ENCODE measurements at regions of chr1 and their contacts with region 1.

Region 1: GRCh38 chr1:91165033-91165654 is 143.3 kb upstream of the ZNF644 start:
- DNase-seq: peak; percentile 11
- ATAC-seq: peak; percentile 99
- H3K4me3 ChIP-seq: no peak overlapping the region
- H3K27ac ChIP-seq: no peak overlapping the region
- H3K4me1 ChIP-seq: no peaks in the 10 kb centered on the region
- H3K27me3 ChIP-seq: no peaks in the 10 kb centered on the region; a peak in 1 of 4 replicates
- CTCF ChIP-seq: peak; percentile 92 to 99 (median 95)
- EP300 ChIP-seq: no peak
- POLR2A ChIP-seq: no peak
- RAD21 ChIP-seq: peak; percentile 88

Region 2: GRCh38 chr1:90045853-90046563 is 1119.1 kb before region 1 on chr1:
- CTCF ChIA-PET with region 1: interaction called, 19 read pairs
- POLR2A ChIA-PET with region 1: no interaction called
- RAD21 ChIA-PET with region 1: no interaction called
- SMC1A ChIA-PET with region 1: interaction called, 3 read pairs
- in situ Hi-C with region 1: no loop called
- intact Hi-C with region 1: loop called (anchors 2 kb)
- DNase-seq: no peak
- ATAC-seq: peak; percentile 85
- H3K4me3 ChIP-seq: no peak overlapping the region
- H3K27ac ChIP-seq: no peak overlapping the region
- H3K4me1 ChIP-seq: no peaks in the 10 kb centered on the region
- H3K27me3 ChIP-seq: no peaks in the 10 kb centered on the region
- CTCF ChIP-seq: peak; percentile 58 to 68 (median 64)
- EP300 ChIP-seq: no peak
- POLR2A ChIP-seq: no peak
- RAD21 ChIP-seq: peak; percentile 60

Region 3: GRCh38 chr1:90579212-90579802 is 585.8 kb before region 1 on chr1:
- CTCF ChIA-PET with region 1: interaction called, 13 read pairs
- POLR2A ChIA-PET with region 1: no interaction called
- RAD21 ChIA-PET with region 1: interaction called, 3 read pairs
- SMC1A ChIA-PET with region 1: interaction called, 14 read pairs
- in situ Hi-C with region 1: no loop called
- intact Hi-C with region 1: no loop called
- DNase-seq: no peak
- ATAC-seq: peak; percentile 85
- H3K4me3 ChIP-seq: no peak overlapping the region
- H3K27ac ChIP-seq: no peak overlapping the region
- H3K4me1 ChIP-seq: no peaks in the 10 kb centered on the region
- H3K27me3 ChIP-seq: no peaks in the 10 kb centered on the region
- CTCF ChIP-seq: peak; percentile 46 to 66 (median 52); a peak in 5 of 6 replicates
- EP300 ChIP-seq: no peak
- POLR2A ChIP-seq: no peak
- RAD21 ChIP-seq: peak; percentile 57

Region 4: DNA sequence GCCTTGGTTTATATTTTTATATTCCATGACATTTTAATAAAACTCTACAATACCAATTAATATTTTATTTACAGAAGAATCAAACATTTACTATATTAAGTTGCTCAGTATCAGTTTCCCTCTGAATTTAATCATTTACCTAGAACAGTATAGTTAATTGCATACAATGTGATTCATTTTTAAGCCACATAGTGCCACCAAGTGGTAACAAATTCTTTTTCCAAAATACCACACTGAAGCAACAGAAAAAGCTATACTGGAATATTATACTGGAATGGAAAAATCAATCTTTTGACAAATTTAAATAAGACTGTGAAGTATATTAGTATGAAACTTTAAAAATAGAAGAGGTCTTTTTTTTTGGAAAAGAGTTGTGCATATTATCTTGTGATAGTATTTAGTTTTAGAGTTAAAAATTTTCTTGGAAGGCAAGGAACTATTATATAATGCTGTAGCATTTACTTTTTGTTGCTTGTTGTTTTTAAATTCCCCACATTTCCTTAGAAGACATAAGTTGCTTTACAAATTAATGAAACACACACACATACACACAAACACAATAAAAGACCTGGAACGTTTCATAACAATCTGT is 200.6 kb before region 1 on chr1:
- CTCF ChIA-PET with region 1: interaction called, 14 read pairs
- POLR2A ChIA-PET with region 1: no interaction called
- RAD21 ChIA-PET with region 1: interaction called, 3 read pairs
- SMC1A ChIA-PET with region 1: interaction called, 3 read pairs
- in situ Hi-C with region 1: no loop called
- intact Hi-C with region 1: loop called (anchors 5 kb)
- DNase-seq: no peak
- ATAC-seq: peak; percentile 65
- H3K4me3 ChIP-seq: no peak overlapping the region
- H3K27ac ChIP-seq: no peak overlapping the region
- H3K4me1 ChIP-seq: peaks cover 5% of the 10 kb centered on the region; the same call in 1 of the 2 replicates
- H3K27me3 ChIP-seq: no peaks in the 10 kb centered on the region
- CTCF ChIP-seq: peak; percentile 12 to 56 (median 18); a peak in 2 of 6 replicates
- EP300 ChIP-seq: no peak
- POLR2A ChIP-seq: no peak
- RAD21 ChIP-seq: peak; percentile 43

Region 5: DNA sequence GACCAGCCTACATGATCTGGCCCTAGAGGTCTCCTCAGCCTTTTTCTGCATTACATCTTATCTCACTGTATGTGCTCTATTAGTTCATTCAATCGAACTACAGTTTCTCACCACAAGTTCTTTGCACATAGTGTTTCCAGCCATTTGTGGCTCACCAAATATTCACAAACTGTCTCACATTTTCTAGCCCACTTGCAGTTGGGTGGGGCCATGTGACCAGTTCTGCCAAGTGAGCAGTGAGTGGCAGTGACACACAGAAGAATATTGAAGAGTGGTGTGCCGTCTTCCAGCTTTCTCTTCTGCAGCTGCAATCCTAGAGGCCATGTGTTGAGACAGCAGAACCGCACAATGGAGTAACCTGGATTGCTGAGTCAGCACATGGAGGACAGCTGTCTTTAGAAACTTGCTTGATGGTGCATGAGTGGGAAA is 40.1 kb before region 1 on chr1:
- CTCF ChIA-PET with region 1: interaction called, 24 read pairs
- POLR2A ChIA-PET with region 1: no interaction called
- RAD21 ChIA-PET with region 1: interaction called, 9 read pairs
- SMC1A ChIA-PET with region 1: interaction called, 3 read pairs
- in situ Hi-C with region 1: no loop called
- intact Hi-C with region 1: no loop called
- DNase-seq: no peak
- ATAC-seq: peak; percentile 78
- H3K4me3 ChIP-seq: no peak overlapping the region
- H3K27ac ChIP-seq: no peak overlapping the region
- H3K4me1 ChIP-seq: no peaks in the 10 kb centered on the region
- H3K27me3 ChIP-seq: no peaks in the 10 kb centered on the region
- CTCF ChIP-seq: no peak
- EP300 ChIP-seq: no peak
- POLR2A ChIP-seq: no peak
- RAD21 ChIP-seq: no peak

Region 6: DNA sequence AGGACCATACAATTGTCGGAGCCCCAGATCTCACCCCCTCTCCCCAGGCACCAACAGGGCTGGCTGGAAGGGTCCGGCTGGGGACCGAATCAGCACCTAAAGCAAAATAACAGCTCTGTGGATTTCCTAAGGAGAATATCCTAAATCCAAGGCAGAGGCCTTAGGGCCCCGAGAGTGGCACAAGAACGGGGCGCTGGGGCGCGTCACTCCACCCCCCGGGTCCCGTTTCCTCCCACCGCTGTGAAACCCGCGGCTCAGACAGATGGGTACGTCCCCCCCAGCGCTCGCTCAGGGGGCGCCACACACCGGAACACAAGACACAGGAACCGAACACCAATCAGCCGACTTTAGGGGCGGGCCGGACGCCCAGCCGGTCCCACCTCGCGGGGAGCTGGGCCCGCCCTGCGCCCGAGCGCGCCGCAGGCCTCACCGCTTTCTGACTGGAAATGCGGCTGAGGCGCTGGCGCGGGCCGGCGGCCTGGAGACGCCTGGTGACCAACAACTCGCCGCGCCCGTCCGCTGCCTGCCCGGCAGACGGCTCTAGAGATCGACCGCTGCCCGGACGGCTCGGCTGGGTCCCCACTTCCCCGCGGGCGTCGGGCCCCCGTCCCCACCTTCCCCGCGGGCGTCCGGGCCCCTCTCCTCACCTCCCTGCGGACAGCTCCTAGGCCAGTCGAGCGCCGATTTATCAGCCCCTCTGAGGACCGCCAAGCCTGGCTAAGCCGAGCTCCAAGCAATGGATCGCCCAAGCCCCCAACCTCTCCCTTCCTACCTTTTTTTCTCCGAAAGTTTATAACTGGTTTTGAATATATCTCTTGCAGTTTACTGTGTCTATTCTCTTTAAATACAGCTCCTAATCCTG is 239.2 kb after region 1 on chr1 and contains the start of gene HFM1:
- CTCF ChIA-PET with region 1: no interaction called
- POLR2A ChIA-PET with region 1: no interaction called
- RAD21 ChIA-PET with region 1: no interaction called
- SMC1A ChIA-PET with region 1: no interaction called
- in situ Hi-C with region 1: no loop called
- intact Hi-C with region 1: loop called (anchors 5 kb)
- DNase-seq: no peak
- ATAC-seq: peak; percentile 97
- H3K4me3 ChIP-seq: peak within 1 kb of the TSS; percentile 60
- H3K27ac ChIP-seq: no peak within 1 kb of the TSS
- H3K4me1 ChIP-seq: no peaks in the 10 kb centered on the region
- H3K27me3 ChIP-seq: peaks cover 0 to 10% of the 10 kb centered on the region in 2 experiments; a peak in 3 of 4 replicates
- CTCF ChIP-seq: no peak
- EP300 ChIP-seq: no peak
- POLR2A ChIP-seq: no peak
- RAD21 ChIP-seq: no peak
- polyA plus RNA-seq, gene HFM1: not detected

Region 7: DNA sequence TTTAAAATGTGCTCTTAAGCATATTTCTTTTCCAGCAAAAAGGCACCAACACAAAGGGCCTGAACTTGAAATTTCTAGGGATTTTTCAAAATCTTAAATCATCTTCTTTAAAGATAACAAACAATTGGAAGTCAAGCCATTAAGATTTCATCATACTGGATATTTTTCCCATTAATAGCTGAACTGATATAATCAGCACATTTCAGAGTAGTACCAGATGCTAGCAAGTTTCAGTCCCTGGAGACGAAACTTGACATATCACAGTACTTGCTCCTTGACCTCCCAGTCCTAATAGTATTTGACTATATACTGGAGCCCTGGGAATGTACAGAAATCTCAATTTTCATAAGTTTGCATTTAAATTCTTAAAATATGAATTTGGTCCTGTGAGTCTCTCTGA is 325.4 kb after region 1 on chr1:
- CTCF ChIA-PET with region 1: no interaction called
- POLR2A ChIA-PET with region 1: no interaction called
- RAD21 ChIA-PET with region 1: no interaction called
- SMC1A ChIA-PET with region 1: no interaction called
- in situ Hi-C with region 1: no loop called
- intact Hi-C with region 1: no loop called
- DNase-seq: no peak
- ATAC-seq: no peak
- H3K4me3 ChIP-seq: no peak overlapping the region
- H3K27ac ChIP-seq: no peak overlapping the region
- H3K4me1 ChIP-seq: no peaks in the 10 kb centered on the region
- H3K27me3 ChIP-seq: no peaks in the 10 kb centered on the region
- CTCF ChIP-seq: no peak
- EP300 ChIP-seq: no peak
- POLR2A ChIP-seq: no peak
- RAD21 ChIP-seq: no peak